Natural killer cell (primary cell): ENCODE measurements at regions of chr7 and their contacts with region 1.

Region 1: DNA sequence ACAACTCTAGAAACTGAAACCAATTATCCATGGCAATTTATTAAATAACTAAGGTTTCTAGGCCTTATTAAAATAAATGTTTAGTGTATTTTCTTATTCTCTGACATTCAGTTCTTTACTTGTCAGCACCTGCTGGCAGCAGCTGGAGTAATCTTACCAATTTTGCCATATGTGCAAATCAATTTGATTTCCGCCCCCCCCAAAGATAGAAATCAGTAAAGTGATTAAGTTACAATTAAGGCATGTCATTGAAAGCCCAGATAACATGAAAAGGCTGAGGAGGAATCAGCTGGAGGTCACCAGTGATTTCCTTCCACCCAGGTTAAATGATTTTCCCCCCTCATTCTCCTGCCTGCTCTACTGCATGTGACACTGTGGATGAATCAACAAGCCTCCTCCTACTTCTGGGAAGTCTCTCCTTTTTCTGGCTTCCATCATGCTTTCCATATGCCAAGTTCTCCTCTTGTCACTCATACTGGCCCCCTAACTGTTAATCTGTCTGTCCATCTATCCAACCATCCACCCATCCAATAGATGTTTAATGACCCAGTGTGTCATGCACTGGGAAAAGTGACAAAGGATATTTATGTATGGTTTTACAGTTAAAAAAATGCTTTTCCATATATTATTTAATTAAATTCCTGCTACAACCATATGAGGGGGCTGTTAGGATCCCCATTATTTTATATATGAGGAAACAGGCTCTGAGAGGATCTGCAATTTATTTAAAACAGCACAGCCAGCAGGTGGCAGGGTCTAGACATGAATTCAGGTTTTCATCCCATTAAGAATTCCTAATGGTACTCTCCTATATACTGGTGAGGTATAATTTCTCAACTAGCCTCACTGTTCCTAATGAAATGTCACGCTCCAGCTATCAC is 116.5 kb downstream of the ATXN7L1 start:
- DNase-seq: peak in 1 of 2 donors; percentile 59
- ATAC-seq: peak in 2 of 3 donors; percentile 44 to 58
- H3K4me3 ChIP-seq: no peak overlapping the region
- H3K4me3 Mint-ChIP-seq: no peak overlapping the region
- H3K27ac ChIP-seq: no peak overlapping the region
- H3K27ac Mint-ChIP-seq: peak overlapping the region; percentile 19 to 55
- H3K4me1 ChIP-seq: peaks cover 26% of the 10 kb centered on the region
- H3K4me1 Mint-ChIP-seq: peaks cover 37 to 50% of the 10 kb centered on the region in 2 donors
- H3K27me3 ChIP-seq: no peaks in the 10 kb centered on the region
- H3K27me3 Mint-ChIP-seq: no peaks in the 10 kb centered on the region
- CTCF ChIP-seq: peak; percentile 78

Region 2: DNA sequence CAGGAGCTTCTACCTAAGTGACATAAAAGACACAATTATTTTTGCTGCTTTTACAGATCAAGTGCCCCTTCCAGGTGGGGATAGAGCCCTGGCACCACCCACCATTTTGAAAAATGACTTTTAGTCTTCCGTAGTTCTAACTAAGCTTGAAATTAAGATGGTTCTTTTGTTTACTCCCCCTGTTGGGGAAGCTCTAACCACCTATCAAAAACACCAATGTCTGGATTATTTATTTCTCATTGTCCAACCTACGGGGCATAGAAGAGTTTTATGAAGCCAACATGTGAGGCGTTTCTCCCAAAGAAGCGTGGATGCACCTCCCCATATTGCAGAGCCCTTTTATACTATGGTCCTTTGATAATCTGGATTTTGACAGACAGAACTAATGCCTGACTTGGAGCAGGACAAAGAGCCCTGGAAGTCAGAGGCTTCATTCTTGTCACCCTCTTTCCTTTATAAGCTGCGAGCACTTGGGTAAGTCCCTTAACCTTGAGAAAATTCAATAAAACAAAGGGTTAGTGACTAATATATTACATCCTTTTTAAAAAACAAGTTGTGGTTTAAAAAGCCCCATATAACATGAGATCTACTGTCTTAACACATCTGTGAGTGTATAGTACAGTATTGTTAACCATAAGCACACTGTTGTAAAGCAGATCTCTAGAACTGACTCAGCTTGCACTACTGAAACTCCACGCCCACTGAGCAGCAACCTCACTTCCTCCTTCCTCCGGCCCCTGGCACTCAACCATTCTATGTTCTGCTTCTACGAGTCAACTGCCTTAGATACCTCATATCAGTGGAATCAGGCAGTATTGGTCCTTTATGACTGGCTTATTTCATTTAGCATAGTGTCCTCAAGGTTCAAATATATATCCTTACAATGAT is 49.0 kb after region 1 on chr7:
- intact Hi-C with region 1: loop called (anchors 2 kb)
- DNase-seq: peak; percentile 62 to 85
- ATAC-seq: peak; percentile 81 to 94 (median 92)
- H3K4me3 ChIP-seq: no peak overlapping the region
- H3K4me3 Mint-ChIP-seq: peak overlapping the region; percentile 79
- H3K27ac ChIP-seq: peak overlapping the region; percentile 78
- H3K27ac Mint-ChIP-seq: peak overlapping the region; percentile 94 to 98
- H3K4me1 ChIP-seq: peaks cover 46% of the 10 kb centered on the region
- H3K4me1 Mint-ChIP-seq: peaks cover 62 to 76% of the 10 kb centered on the region in 2 donors
- H3K27me3 ChIP-seq: no peaks in the 10 kb centered on the region
- H3K27me3 Mint-ChIP-seq: no peaks in the 10 kb centered on the region
- CTCF ChIP-seq: no peak

Region 3: DNA sequence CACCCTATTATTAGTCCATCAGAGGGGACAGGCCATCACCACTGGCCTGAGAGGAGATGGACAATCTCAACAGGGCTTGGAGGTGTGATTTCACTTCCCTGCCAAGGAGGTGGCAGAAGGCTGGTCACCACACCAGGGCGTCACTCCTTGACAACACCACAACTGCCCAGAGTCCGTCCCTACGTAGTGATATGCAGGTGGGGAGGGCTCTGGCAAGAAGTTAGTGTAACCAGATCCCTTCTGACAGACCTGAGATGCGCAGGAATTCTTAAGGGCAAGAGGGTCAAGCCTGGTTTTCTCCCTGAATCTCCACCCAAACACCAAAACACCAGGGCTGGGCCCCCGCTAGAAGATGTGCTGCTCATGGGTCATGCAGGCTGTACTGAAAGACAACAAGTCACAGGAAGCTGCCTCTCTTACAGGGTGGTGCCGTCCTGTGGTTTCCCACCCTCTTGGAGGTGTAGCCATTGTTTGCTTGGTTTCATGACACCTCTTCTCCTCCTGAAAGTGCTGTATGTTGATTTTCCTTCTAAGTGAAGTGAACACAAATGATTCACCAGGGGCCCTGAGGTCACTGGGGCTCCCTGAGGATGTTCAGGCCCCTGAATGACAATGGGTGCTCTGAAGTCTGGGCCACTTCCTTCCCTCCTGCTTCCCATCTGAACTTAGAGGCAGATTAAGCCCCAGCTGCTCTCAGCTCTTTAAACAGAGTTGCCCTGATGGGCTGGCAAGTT is 89.4 kb after region 1 on chr7:
- intact Hi-C with region 1: loop called (anchors 1 kb)
- DNase-seq: peak; percentile 74 to 82
- ATAC-seq: peak; percentile 89 to 97 (median 94)
- H3K4me3 ChIP-seq: no peak overlapping the region
- H3K4me3 Mint-ChIP-seq: peak overlapping the region; percentile 88
- H3K27ac ChIP-seq: peak overlapping the region; percentile 86
- H3K27ac Mint-ChIP-seq: peak overlapping the region; percentile 96 to 97
- H3K4me1 ChIP-seq: peaks cover 58% of the 10 kb centered on the region
- H3K4me1 Mint-ChIP-seq: peaks cover 80 to 84% of the 10 kb centered on the region in 2 donors
- H3K27me3 ChIP-seq: no peaks in the 10 kb centered on the region
- H3K27me3 Mint-ChIP-seq: no peaks in the 10 kb centered on the region
- CTCF ChIP-seq: no peak

Region 4: DNA sequence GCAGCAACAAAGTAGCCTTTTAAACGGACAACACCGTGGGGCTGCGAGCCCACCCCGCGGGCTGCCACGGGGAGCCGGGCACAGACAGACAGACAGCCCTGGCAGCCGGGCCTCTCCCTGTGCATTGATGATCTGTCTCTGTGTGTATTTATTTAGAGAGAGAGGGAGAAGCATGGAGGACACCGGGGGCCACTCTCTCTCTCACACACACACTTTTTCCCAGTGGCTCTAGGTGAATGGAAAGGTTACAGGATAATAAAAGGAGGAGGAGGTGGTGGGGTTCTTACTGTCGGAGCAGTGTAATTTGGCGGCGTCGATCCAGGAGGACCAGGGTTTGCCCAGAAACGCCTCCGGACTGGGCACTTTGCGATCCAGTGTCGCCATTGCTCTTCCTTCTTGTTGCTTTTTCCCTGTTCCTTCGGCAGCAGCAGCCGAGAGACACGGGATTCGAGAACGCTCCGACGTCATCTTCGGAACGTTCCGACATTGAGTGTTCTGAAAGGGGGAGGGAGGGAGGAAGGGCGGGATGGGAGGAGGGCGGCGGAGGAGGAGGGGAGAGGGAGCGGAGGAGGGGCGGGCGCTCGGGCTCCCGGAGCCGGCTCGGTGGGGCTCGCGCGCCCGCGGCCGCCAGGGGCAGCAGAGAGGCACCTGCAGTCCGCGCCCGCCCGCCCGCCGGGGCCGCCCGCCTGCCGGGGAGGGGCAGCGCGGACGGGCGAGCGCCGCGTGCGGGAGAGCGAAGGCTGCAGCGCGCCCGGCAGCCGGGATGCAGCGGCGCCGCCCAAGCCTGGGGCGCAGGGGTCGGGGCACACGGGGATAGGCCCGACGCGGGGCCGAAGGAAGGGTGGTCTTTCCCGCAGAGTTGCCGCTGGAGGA is 116.4 kb after region 1 on chr7 and contains the start of gene ATXN7L1:
- intact Hi-C with region 1: loop called (anchors 2 kb)
- DNase-seq: peak; percentile 90 to 95
- ATAC-seq: peak; percentile 97 to 99 (median 99)
- H3K4me3 ChIP-seq: peak within 1 kb of the TSS; percentile 81
- H3K4me3 Mint-ChIP-seq: peak within 1 kb of the TSS; percentile 98
- H3K27ac ChIP-seq: peak within 1 kb of the TSS; percentile 56
- H3K27ac Mint-ChIP-seq: peak within 1 kb of the TSS; percentile 85 to 96
- H3K4me1 ChIP-seq: peaks cover 31% of the 10 kb centered on the region
- H3K4me1 Mint-ChIP-seq: peaks cover 60 to 61% of the 10 kb centered on the region in 2 donors
- H3K27me3 ChIP-seq: no peaks in the 10 kb centered on the region
- H3K27me3 Mint-ChIP-seq: no peaks in the 10 kb centered on the region
- CTCF ChIP-seq: peak; percentile 32
- total RNA-seq, gene ATXN7L1: 37.5 to 48.6 (median 47.9) TPM

Region 5: DNA sequence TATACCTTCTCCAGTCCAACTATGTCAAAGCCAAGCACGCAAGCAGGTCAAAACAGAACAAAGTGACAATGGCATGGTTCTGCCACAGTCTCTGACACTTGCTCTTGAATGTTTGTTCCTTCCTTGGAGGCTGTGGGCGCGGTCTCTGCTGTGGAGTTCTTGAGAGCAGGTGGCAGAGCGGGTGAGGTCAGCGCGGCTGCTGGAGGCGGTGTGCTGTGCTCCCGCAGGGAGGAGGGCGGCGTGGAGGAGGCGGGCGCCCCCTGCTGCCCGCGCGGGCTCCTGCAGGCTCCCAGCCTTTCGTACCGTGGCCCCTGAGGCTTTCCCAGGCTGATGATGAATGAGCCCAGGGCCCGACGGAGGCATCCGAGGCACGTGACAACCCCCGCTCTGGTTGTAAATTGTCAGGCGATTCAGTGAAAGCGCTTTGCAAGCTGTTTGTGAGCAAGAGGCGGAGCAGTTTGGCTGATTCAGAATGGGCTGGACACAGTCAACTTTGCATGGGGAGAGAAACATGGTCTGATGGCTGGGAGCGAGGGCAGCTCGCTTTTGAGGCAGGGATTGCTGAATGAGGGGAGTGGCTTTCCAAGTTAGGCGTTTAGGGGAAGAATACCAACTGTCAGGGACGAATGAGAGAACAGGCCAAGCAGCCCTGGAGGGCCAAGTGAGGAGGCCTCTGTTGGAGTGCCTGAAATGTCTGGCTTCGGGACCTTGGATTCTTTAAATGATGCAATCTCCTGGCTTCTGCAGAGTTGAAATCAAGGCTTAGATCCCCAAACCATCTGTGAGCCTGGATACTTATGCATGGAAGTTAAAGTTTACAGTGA is 249.7 kb after region 1 on chr7:
- intact Hi-C with region 1: loop called (anchors 1 kb)
- DNase-seq: peak; percentile 77 to 89
- ATAC-seq: peak; percentile 92 to 100 (median 99)
- H3K4me3 ChIP-seq: no peak overlapping the region
- H3K4me3 Mint-ChIP-seq: no peak overlapping the region
- H3K27ac ChIP-seq: no peak overlapping the region
- H3K27ac Mint-ChIP-seq: no peak overlapping the region
- H3K4me1 ChIP-seq: peaks cover 10% of the 10 kb centered on the region
- H3K4me1 Mint-ChIP-seq: peaks cover 9 to 13% of the 10 kb centered on the region in 2 donors
- H3K27me3 ChIP-seq: peaks cover 5% of the 10 kb centered on the region
- H3K27me3 Mint-ChIP-seq: peaks cover 24 to 54% of the 10 kb centered on the region in 2 donors
- CTCF ChIP-seq: peak; percentile 93

Region 6: GRCh38 chr7:106041140-106041717 is 281.3 kb after region 1 on chr7:
- intact Hi-C with region 1: loop called (anchors 1 kb)
- DNase-seq: peak in 1 of 2 donors; percentile 65
- ATAC-seq: peak; percentile 60 to 68 (median 63)
- H3K4me3 ChIP-seq: no peak overlapping the region
- H3K4me3 Mint-ChIP-seq: no peak overlapping the region
- H3K27ac ChIP-seq: no peak overlapping the region
- H3K27ac Mint-ChIP-seq: no peak overlapping the region
- H3K4me1 ChIP-seq: peaks cover 8% of the 10 kb centered on the region
- H3K4me1 Mint-ChIP-seq: peaks cover 8% of the 10 kb centered on the region in 2 donors
- H3K27me3 ChIP-seq: peaks cover 4% of the 10 kb centered on the region
- H3K27me3 Mint-ChIP-seq: peaks cover 31% of the 10 kb centered on the region in 2 donors
- CTCF ChIP-seq: peak; percentile 72

Region 7: DNA sequence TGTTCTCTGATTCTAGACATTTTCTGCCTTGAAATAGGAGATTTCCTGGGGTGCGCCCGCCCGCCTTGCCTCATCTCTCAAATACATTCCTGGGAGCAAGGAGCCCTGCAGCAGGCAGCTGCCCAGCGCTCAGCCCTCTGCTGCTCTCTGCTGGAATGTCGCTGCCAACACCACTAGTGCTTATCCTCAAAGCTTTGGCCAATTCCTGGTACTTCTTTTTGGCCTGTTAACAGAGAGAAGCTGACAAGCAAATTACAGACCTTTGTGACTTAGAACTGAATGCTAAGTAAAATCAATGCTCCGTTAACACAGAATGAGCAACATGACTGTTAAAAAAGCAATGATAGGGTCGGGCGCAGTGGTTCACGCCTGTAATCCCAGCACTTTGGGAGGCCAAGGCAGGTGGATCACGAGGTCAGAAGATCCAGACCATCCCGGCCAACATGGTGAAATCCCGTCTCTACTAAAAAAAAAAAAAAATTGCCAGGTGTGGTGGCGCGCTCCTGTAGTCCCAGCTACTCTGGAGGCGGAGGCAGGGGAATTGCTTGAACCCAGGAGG is 394.1 kb after region 1 on chr7:
- intact Hi-C with region 1: loop called (anchors 10 kb)
- DNase-seq: peak; percentile 63 to 85
- ATAC-seq: peak; percentile 84 to 99 (median 98)
- H3K4me3 ChIP-seq: no peak overlapping the region
- H3K4me3 Mint-ChIP-seq: no peak overlapping the region
- H3K27ac ChIP-seq: no peak overlapping the region
- H3K27ac Mint-ChIP-seq: no peak overlapping the region
- H3K4me1 ChIP-seq: peaks cover 9% of the 10 kb centered on the region
- H3K4me1 Mint-ChIP-seq: peaks cover 0 to 8% of the 10 kb centered on the region in 2 donors
- H3K27me3 ChIP-seq: peaks cover 6% of the 10 kb centered on the region
- H3K27me3 Mint-ChIP-seq: peaks cover 29 to 53% of the 10 kb centered on the region in 2 donors
- CTCF ChIP-seq: peak; percentile 92